ENCODE measurements at regions of chr10 and their contacts with region 1.

Region 1: GRCh38 chr10:48656241-48656913 is 28.3 kb upstream of the WDFY4 start:
- DNase-seq: peak; percentile 92 to 95 (median 93)
- ATAC-seq: peak; percentile 94
- H3K4me3 ChIP-seq: peak overlapping the region; percentile 8 to 46
- H3K27ac ChIP-seq: peak overlapping the region in 3 of 4 donors; percentile 76 to 83 (median 83)
- H3K4me1 ChIP-seq: peaks cover 17% of the 10 kb centered on the region
- H3K27me3 ChIP-seq: no peaks in the 10 kb centered on the region
- CTCF ChIP-seq: peak; percentile 81 to 100 (median 99)
- POLR2A ChIP-seq: no peak

Region 2: DNA sequence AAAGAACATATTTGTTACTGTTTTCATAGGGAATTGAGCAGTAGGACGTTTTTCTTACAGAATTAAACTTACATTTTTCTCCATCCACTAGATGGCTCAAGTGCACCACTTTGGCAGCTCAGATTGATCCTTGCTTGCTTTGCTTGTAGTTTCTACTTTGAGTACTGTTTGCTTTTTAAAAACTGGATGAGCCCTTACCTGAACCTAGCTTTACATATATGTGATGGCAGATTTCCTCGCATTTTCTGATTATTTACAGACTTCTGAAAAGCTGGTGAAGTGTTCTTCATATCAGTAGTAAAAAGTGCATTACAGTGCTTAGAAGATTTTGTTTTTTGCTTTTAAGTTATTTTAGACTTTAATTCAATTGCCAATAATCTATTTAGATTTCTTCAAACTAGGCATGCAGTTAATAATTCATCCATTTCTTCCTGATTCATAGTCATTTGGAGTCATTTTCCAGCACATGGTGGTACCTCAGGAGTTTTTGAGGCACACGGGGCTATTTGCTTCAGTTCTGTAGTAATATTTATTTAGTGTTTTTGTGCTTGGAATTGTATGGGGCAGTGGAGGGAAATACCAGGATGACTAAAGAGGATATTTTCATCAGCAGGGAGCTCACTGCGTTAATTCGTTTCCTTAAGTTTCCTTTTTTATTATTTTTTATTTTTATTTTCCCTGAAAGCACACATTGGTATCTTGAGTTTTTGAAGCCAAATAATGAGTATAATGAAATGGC is 292.6 kb before region 1 on chr10:
- intact Hi-C with region 1: loop called (anchors 10 kb)
- DNase-seq: peak; percentile 33 to 48 (median 40)
- ATAC-seq: peak; percentile 68
- H3K4me3 ChIP-seq: no peak overlapping the region
- H3K27ac ChIP-seq: peak overlapping the region in 1 of 4 donors; percentile 44
- H3K4me1 ChIP-seq: peaks cover 30% of the 10 kb centered on the region
- H3K27me3 ChIP-seq: no peaks in the 10 kb centered on the region
- CTCF ChIP-seq: peak; percentile 20 to 80 (median 74)
- POLR2A ChIP-seq: no peak